Caco-2 (cell line): ENCODE measurements at regions of chr17 and their contacts with region 1.

Region 1: DNA sequence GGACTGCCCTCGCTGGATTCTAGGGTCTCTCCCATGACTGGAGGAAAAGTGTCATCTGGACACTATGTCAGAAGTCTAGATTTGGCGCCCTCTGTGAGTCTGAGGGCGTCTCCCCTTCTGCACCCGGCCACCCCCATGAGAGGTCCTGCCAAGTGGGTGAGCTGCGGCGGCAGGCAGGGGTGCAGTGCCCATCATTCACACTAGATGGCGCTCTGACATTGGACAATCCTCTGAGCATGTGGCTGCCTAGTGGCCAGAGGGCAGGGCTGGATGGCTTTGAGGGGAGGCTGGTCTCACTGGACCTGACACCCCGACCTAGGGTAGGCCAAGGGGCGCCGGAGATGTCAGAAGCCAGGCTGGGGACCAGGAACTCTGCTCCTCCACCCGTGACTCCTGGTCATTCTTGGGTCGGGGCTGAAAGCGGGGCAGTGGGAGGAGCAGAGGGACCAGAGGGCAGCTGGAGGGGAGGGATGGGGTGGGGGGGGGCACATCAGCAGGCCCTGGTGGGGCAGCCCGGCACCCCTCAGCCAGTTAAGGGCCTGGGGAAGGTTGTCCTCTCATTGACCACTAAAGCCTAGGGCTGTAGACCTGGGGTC is 28.0 kb downstream of the MRM1 start:
- DNase-seq: peak; percentile 82 to 90
- H3K4me3 ChIP-seq: no peak overlapping the region
- H3K4me3 Mint-ChIP-seq: no peak overlapping the region
- H3K27ac Mint-ChIP-seq: no peak overlapping the region
- H3K4me1 ChIP-seq: no peaks in the 10 kb centered on the region
- H3K4me1 Mint-ChIP-seq: no peaks in the 10 kb centered on the region
- H3K27me3 ChIP-seq: no peaks in the 10 kb centered on the region
- H3K27me3 Mint-ChIP-seq: peaks cover 14% of the 10 kb centered on the region
- CTCF ChIP-seq: peak; percentile 96 to 98

Region 2: GRCh38 chr17:36673637-36674277 is 44.4 kb after region 1 on chr17:
- CTCF ChIA-PET with region 1: no interaction called
- POLR2A ChIA-PET with region 1: no interaction called
- intact Hi-C with region 1: loop called (anchors 2 kb)
- DNase-seq: no peak
- H3K4me3 ChIP-seq: no peak overlapping the region
- H3K4me3 Mint-ChIP-seq: no peak overlapping the region
- H3K27ac Mint-ChIP-seq: no peak overlapping the region
- H3K4me1 ChIP-seq: no peaks in the 10 kb centered on the region
- H3K4me1 Mint-ChIP-seq: no peaks in the 10 kb centered on the region
- H3K27me3 ChIP-seq: no peaks in the 10 kb centered on the region; the same call in 1 of the 2 replicates
- H3K27me3 Mint-ChIP-seq: peaks cover 27% of the 10 kb centered on the region
- CTCF ChIP-seq: no peak

Region 3: GRCh38 chr17:36705874-36706731 is 76.8 kb after region 1 on chr17:
- CTCF ChIA-PET with region 1: interaction called, 6 read pairs
- POLR2A ChIA-PET with region 1: no interaction called
- intact Hi-C with region 1: loop called (anchors 1 kb)
- DNase-seq: peak; percentile 58 to 66
- H3K4me3 ChIP-seq: no peak overlapping the region
- H3K4me3 Mint-ChIP-seq: no peak overlapping the region
- H3K27ac Mint-ChIP-seq: no peak overlapping the region
- H3K4me1 ChIP-seq: no peaks in the 10 kb centered on the region
- H3K4me1 Mint-ChIP-seq: no peaks in the 10 kb centered on the region
- H3K27me3 ChIP-seq: no peaks in the 10 kb centered on the region; the same call in 1 of the 2 replicates
- H3K27me3 Mint-ChIP-seq: peaks cover 20% of the 10 kb centered on the region
- CTCF ChIP-seq: peak; percentile 80 to 94

Region 4: DNA sequence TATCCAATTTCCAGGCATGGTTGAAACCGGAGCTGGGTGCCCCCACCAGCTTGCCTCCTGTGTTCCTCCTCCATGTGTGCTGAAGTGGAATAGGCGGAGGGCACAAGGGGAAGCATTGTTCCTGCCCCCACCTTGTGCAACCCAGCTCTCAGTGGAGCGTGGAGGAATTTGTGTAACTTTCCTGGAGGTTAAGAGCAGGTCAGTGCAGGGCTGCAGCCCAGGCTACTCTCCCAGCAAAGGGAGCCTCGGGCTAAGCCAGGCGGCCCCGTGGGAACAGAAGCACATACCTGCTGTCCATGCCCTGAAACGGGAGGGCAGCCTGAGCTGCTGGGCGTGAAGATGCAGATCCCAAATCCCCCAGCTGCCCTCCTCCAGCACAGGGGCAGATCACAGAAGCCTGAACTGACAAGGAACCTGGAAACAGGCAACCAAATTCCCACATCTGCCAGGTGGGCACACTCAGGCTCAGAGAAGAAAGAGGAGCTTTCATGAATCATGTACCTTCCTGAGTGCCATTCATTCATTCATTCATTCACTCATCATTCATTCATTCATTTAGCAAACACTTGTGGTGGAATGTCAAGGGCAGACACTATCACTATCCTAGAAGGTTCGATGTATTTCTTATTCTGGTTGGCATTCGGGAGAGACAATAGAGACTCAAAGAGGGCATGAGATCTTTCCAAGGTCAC is 149.2 kb after region 1 on chr17:
- CTCF ChIA-PET with region 1: interaction called, 10 read pairs
- POLR2A ChIA-PET with region 1: no interaction called
- intact Hi-C with region 1: no loop called
- DNase-seq: no peak
- H3K4me3 ChIP-seq: no peak overlapping the region
- H3K4me3 Mint-ChIP-seq: no peak overlapping the region
- H3K27ac Mint-ChIP-seq: no peak overlapping the region
- H3K4me1 ChIP-seq: 0 out of 2 replicates have a peak, but pooled peaks cover 6% of the 10 kb centered on the region
- H3K4me1 Mint-ChIP-seq: peaks cover 8% of the 10 kb centered on the region
- H3K27me3 ChIP-seq: no peaks in the 10 kb centered on the region
- H3K27me3 Mint-ChIP-seq: peaks cover 15% of the 10 kb centered on the region
- CTCF ChIP-seq: no peak

Region 5: GRCh38 chr17:36937966-36938565 is 308.7 kb after region 1 on chr17:
- CTCF ChIA-PET with region 1: no interaction called
- POLR2A ChIA-PET with region 1: no interaction called
- intact Hi-C with region 1: loop called (anchors 5 kb)
- DNase-seq: no peak
- H3K4me3 ChIP-seq: peak overlapping the region; percentile 11; the same call in 1 of the 2 replicates
- H3K4me3 Mint-ChIP-seq: peak overlapping the region; percentile 83
- H3K27ac Mint-ChIP-seq: no peak overlapping the region
- H3K4me1 ChIP-seq: peaks cover 23% of the 10 kb centered on the region
- H3K4me1 Mint-ChIP-seq: peaks cover 6% of the 10 kb centered on the region
- H3K27me3 ChIP-seq: peaks cover 28% of the 10 kb centered on the region
- H3K27me3 Mint-ChIP-seq: peaks cover 42% of the 10 kb centered on the region
- CTCF ChIP-seq: no peak